ENCODE measurements at regions of chr11 and their contacts with region 1.

Region 1: GRCh38 chr11:125123947-125124617 is 12.7 kb upstream of the TMEM218 start:
- DNase-seq: no peak
- ATAC-seq: peak; percentile 79
- H3K4me3 ChIP-seq: no peak overlapping the region
- H3K27ac ChIP-seq: no peak overlapping the region
- H3K4me1 ChIP-seq: no peaks in the 10 kb centered on the region
- H3K27me3 ChIP-seq: no peaks in the 10 kb centered on the region; a peak in 2 of 4 replicates
- CTCF ChIP-seq: peak; percentile 27 to 61 (median 38); a peak in 4 of 6 replicates
- EP300 ChIP-seq: no peak
- POLR2A ChIP-seq: no peak
- RAD21 ChIP-seq: peak; percentile 32

Region 2: GRCh38 chr11:124961972-124962609 is 162.0 kb before region 1 on chr11:
- CTCF ChIA-PET with region 1: interaction called, 20 read pairs
- POLR2A ChIA-PET with region 1: no interaction called
- RAD21 ChIA-PET with region 1: interaction called, 3 read pairs
- SMC1A ChIA-PET with region 1: interaction called, 6 read pairs
- in situ Hi-C with region 1: no loop called
- intact Hi-C with region 1: no loop called
- DNase-seq: peak; percentile 51
- ATAC-seq: peak; percentile 97
- H3K4me3 ChIP-seq: no peak overlapping the region
- H3K27ac ChIP-seq: no peak overlapping the region
- H3K4me1 ChIP-seq: no peaks in the 10 kb centered on the region
- H3K27me3 ChIP-seq: no peaks in the 10 kb centered on the region
- CTCF ChIP-seq: peak; percentile 67 to 91 (median 74); a peak in 5 of 6 replicates
- EP300 ChIP-seq: no peak
- POLR2A ChIP-seq: no peak
- RAD21 ChIP-seq: peak; percentile 97

Region 3: DNA sequence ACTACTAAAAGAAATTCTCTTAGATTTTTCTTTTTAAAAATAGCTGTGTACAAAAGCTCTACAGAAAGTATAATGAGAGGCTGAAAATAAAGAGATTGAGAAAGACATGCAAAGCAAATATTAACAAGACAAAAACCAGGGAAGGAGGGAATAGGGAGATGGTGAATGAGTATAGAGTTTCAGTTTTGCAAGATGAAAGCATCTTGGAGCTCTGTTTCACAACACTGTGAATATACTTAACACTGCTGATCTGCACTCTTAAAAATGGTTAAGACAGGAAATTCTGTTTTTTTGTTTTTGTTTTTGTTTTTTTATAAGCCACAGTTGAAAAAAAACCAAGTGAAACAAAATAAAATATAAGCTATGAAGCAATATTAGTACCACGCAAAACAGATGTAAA is 18.2 kb before region 1 on chr11:
- CTCF ChIA-PET with region 1: interaction called, 27 read pairs
- POLR2A ChIA-PET with region 1: interaction called, 8 read pairs
- RAD21 ChIA-PET with region 1: interaction called, 4 read pairs
- SMC1A ChIA-PET with region 1: interaction called, 29 read pairs
- in situ Hi-C with region 1: no loop called
- intact Hi-C with region 1: no loop called
- DNase-seq: no peak
- ATAC-seq: peak; percentile 34; the same call in 1 of the 3 replicates
- H3K4me3 ChIP-seq: no peak overlapping the region
- H3K27ac ChIP-seq: no peak overlapping the region
- H3K4me1 ChIP-seq: peaks cover 3% of the 10 kb centered on the region; the same call in 1 of the 2 replicates
- H3K27me3 ChIP-seq: no peaks in the 10 kb centered on the region
- CTCF ChIP-seq: no peak
- EP300 ChIP-seq: no peak
- POLR2A ChIP-seq: no peak
- RAD21 ChIP-seq: no peak

Region 4: DNA sequence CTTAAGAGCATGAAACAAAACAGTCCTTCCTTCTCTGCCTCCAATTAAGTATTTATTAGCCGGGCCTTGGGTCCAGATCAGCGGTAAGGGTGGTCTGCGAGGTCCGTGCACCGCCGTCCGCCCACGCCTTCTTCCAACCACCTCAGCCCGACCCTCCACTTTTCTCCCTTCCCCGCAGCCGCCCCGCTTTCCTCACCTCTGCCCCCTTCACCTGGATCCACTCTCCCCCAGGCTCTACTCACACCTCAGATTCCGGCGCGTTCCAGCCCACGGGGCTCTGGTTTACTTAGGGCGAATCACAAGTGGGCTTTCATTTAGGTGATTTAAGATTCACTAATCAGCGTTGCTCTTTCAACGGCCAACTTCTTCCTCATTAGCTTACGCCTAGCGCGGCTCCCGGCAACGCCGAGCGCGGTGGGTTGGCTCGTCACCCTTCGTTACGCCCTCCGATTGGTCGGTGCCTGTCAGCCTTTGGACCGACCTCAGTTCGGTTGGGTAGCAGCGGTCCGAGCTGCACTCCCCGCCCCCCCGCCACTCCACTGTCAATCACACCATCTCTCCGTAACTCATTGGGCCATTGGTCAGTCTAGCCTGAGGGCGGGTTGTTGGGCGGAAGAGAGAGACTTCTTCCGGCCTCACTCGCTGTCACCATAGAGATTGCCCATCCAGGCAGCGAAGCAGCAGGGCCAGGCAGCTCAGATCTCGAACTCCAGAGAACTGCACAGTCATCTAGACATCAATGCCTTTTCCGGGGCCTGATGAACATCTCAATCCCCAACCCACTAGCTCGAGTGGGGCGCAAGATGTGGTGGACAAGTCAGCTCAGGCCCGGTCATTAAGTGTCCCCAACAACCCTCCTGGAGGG is 12.5 kb before region 1 on chr11 and contains the start of gene TMEM218:
- CTCF ChIA-PET with region 1: interaction called, 27 read pairs
- POLR2A ChIA-PET with region 1: interaction called, 8 read pairs
- RAD21 ChIA-PET with region 1: interaction called, 4 read pairs
- SMC1A ChIA-PET with region 1: interaction called, 29 read pairs
- in situ Hi-C with region 1: no loop called
- intact Hi-C with region 1: no loop called
- DNase-seq: peak; percentile 100
- ATAC-seq: peak; percentile 99
- H3K4me3 ChIP-seq: peak within 1 kb of the TSS; percentile 96
- H3K27ac ChIP-seq: peak within 1 kb of the TSS; percentile 49
- H3K4me1 ChIP-seq: no peaks in the 10 kb centered on the region; the same call in 1 of the 2 replicates
- H3K27me3 ChIP-seq: no peaks in the 10 kb centered on the region
- CTCF ChIP-seq: no peak
- EP300 ChIP-seq: no peak
- POLR2A ChIP-seq: peak; percentile 76
- RAD21 ChIP-seq: no peak
- polyA plus RNA-seq, gene TMEM218: 11.2 to 15.5 TPM